Activated CD8-positive, alpha-beta memory T cell treated with anti-CD3 and anti-CD28 coated beads, Interleukin-2, amount 10 ng/mL, durations not matched to agents 7 days and 5 days (primary cell): ENCODE measurements at regions of chr6 and their contacts with region 1.

Region 1: DNA sequence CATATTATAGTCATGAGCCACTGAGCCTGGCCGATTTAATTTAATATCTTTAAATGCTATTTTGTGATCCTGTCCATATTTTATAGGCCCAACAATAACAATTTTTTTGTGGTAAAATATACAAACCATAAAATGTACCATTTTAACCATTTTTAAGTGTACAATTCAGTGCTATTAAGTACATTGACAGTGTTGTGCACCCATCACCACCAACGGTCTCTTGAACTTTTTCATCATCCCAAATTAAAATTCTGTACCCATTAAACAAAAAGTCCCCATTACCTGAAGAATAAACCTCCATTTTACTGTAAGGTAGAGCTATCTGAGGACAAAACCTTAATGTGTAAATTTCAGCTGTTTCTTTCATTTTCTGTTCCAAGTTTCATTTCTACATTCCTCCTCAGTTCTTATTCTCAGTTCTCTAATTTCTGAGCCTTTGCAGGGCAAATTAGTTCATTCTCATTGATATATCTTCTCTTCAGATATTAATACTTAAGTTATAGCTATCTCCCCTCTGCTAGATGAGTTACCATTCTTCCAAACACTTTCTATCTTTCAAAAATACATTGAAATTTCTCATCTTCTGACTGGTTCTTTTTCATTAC is 10.3 kb downstream of the MTO1 start:
- DNase-seq: no peak
- ATAC-seq: peak; percentile 52
- H3K4me3 Mint-ChIP-seq: peak overlapping the region; percentile 72
- H3K27ac Mint-ChIP-seq: peak overlapping the region; percentile 97
- H3K4me1 Mint-ChIP-seq: peaks cover 24% of the 10 kb centered on the region
- H3K27me3 Mint-ChIP-seq: no peaks in the 10 kb centered on the region

Region 2: GRCh38 chr6:73451223-73452107 is 20.3 kb before region 1 on chr6:
- CTCF ChIA-PET with region 1: interaction called, 20 read pairs
- DNase-seq: peak; percentile 68
- ATAC-seq: peak; percentile 58
- H3K4me3 Mint-ChIP-seq: peak overlapping the region; percentile 100
- H3K27ac Mint-ChIP-seq: peak overlapping the region; percentile 95
- H3K4me1 Mint-ChIP-seq: peaks cover 43% of the 10 kb centered on the region
- H3K27me3 Mint-ChIP-seq: no peaks in the 10 kb centered on the region